Sigmoid colon (tissue), 7 donors: ENCODE measurements at regions of chr10 and their contacts with region 1.

Region 1: DNA sequence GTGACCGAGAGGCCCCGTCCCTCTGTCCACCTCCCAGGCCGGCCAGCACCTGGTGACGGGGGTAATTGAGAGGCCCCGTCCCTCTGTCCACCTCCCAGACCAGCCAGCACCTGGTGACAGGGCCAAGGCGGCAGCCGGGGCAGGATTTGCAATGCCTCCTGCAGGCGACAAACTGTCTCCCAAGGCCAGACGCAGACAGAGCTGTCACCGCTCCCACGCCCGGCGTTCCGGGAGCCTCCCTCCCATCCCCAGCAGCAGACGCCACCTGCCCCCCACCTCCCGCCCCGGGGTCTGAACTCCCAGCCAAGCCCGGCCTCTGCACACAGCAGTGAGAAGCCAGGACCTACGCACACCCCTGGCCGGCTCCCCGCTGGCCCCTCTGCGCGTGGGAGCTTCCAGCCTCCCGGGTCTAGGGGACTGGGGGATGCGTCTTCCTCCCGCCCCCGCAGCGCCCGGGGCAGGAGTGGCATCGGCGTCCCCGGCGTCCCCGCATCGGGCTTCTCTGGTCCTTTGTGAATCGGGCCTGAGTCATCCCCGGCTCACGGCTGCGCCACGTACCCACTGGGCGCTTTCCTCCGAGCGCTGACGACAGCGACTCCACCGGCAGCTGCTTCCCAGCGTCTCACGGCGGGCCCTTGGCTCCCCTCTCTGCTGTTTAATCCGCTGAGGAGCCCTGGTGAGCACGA is 95.1 kb upstream of the DIP2C start:
- DNase-seq: peak; percentile 86
- H3K4me3 ChIP-seq: peak overlapping the region; percentile 18 to 55 (median 45)
- H3K27ac ChIP-seq: peak overlapping the region in 2 of 4 donors; percentile 23 to 62
- H3K4me1 ChIP-seq: peaks cover 0 to 22% (median 13%) of the 10 kb centered on the region in 4 donors
- H3K27me3 ChIP-seq: no peaks in the 10 kb centered on the region
- CTCF ChIP-seq: no peak
- EP300 ChIP-seq: no peak
- POLR2A ChIP-seq: no peak

Region 2: GRCh38 chr10:373522-374309 is 410.8 kb before region 1 on chr10:
- intact Hi-C with region 1: loop called (anchors 10 kb)
- DNase-seq: peak; percentile 84
- H3K4me3 ChIP-seq: no peak overlapping the region
- H3K27ac ChIP-seq: peak overlapping the region in 3 of 4 donors; percentile 70 to 91 (median 80)
- H3K4me1 ChIP-seq: peaks cover 0 to 74% (median 66%) of the 10 kb centered on the region in 4 donors
- H3K27me3 ChIP-seq: no peaks in the 10 kb centered on the region
- CTCF ChIP-seq: no peak
- EP300 ChIP-seq: peak in 3 of 4 donors; percentile 4 to 88 (median 84)
- POLR2A ChIP-seq: no peak

Region 3: GRCh38 chr10:451021-451471 is 333.5 kb before region 1 on chr10:
- intact Hi-C with region 1: loop called (anchors 5 kb)
- DNase-seq: no peak
- H3K4me3 ChIP-seq: no peak overlapping the region
- H3K27ac ChIP-seq: peak overlapping the region; percentile 11 to 83 (median 74)
- H3K4me1 ChIP-seq: peaks cover 0 to 52% (median 45%) of the 10 kb centered on the region in 4 donors
- H3K27me3 ChIP-seq: no peaks in the 10 kb centered on the region
- CTCF ChIP-seq: no peak
- EP300 ChIP-seq: no peak
- POLR2A ChIP-seq: no peak

Region 4: DNA sequence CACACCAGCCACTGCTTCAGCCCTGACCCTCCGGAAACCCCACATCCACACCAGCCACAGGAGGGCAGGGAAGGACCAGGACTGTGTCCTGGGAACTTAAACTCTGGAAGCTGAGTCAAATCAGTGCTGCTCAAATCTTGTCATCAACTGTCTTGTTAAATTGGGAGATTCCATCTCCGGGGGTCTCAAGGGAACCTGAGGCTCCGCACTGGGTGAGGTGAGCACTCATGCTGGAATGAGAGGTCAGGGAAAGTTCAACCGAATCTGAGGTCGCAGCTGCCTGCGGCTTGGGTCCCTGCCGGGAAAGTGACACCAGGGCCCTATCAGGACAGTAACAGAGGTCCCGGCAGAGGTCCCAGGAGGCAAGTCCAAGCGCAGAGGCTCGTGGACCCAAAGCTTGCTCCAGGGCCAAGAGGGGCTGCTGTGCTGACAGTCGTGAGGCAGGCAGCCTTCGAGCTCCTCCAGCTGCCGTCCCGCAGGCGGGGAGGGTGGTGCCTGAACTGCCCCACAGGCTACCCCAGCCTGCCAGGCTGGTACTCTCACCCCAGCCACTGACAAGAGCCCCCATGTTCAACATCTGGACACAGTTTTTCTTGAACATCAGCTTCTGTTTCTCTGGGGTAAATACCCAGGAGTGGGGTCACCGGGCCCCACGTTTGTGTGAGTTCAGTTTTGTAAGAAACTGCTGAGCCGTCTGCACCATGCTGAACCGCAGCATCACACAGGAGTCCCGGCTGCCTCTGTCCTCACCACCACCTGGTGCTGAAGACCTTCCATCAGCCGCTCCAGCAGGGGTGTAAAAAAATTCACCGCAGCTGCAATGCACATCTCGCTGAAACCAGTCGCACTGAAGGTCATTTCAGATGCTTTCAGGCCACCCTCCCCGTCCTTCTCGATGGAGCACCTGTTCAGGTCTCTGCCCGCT is 196.0 kb before region 1 on chr10:
- intact Hi-C with region 1: loop called (anchors 10 kb)
- DNase-seq: no peak
- H3K4me3 ChIP-seq: no peak overlapping the region
- H3K27ac ChIP-seq: peak overlapping the region in 2 of 4 donors; percentile 33 to 59
- H3K4me1 ChIP-seq: peaks cover 0 to 56% (median 40%) of the 10 kb centered on the region in 4 donors
- H3K27me3 ChIP-seq: no peaks in the 10 kb centered on the region
- CTCF ChIP-seq: peak in 1 of 4 experiments; percentile 21
- EP300 ChIP-seq: no peak
- POLR2A ChIP-seq: no peak

Region 5: GRCh38 chr10:1084011-1084950 is 299.7 kb after region 1 on chr10:
- intact Hi-C with region 1: no loop called
- DNase-seq: no peak
- H3K4me3 ChIP-seq: no peak overlapping the region
- H3K27ac ChIP-seq: no peak overlapping the region
- H3K4me1 ChIP-seq: no peaks in the 10 kb centered on the region
- H3K27me3 ChIP-seq: no peaks in the 10 kb centered on the region
- CTCF ChIP-seq: no peak
- EP300 ChIP-seq: no peak
- POLR2A ChIP-seq: no peak